ENCODE measurements at regions of chr20 and their contacts with region 1.

Region 1: GRCh38 chr20:40962730-40963504 is 65.7 kb upstream of the TOP1 start:
- DNase-seq: no peak
- H3K4me3 ChIP-seq: no peak overlapping the region
- CTCF ChIP-seq: peak; percentile 63

Region 2: GRCh38 chr20:39112178-39112743 is 1850.7 kb before region 1 on chr20:
- CTCF ChIA-PET with region 1: interaction called, 17 read pairs
- POLR2A ChIA-PET with region 1: no interaction called
- DNase-seq: no peak
- H3K4me3 ChIP-seq: no peak overlapping the region
- CTCF ChIP-seq: peak; percentile 55

Region 3: DNA sequence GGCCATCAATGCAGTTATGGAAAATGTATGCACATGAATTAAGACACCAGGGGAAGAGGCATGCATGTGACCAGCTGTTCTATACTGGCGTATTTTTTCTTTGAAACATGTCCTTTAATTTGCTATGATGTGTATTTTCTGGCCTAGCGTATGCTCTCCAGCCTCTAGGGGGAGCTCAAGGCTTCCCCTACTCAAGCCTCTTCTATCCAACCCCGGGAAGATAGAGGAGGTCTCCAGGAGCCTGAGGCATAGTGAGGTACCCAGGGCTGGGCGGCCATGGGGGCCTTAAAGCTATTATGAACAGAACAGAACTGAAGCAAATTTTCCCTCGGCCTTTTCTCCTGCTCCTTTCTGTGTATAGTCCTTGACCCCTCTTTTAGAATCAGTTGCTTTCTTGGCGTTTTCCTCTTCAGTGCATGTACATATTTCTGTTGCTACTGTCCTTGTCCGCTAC is 802.8 kb before region 1 on chr20:
- CTCF ChIA-PET with region 1: interaction called, 20 read pairs
- POLR2A ChIA-PET with region 1: no interaction called
- DNase-seq: no peak
- H3K4me3 ChIP-seq: no peak overlapping the region
- CTCF ChIP-seq: peak; percentile 65

Region 4: DNA sequence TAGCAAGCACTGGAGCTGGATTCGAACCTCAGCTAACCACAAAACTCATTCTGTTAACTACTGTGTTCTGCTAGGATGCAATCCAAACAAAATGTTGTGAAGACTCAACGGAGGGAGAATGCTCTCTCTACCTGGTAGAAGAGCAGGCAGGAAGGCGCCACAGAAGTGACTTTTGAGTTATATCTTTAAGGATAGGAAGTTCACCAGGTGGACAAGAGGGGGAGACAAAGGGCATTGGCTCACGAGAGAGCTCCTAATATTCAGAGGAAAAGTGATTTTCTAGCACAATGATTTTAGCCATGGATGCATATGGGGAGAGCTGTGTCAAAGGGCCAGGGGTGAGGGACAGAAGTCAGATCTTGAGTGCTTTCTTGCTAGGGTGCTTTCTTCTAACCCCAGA is 165.5 kb before region 1 on chr20:
- CTCF ChIA-PET with region 1: interaction called, 15 read pairs
- POLR2A ChIA-PET with region 1: no interaction called
- DNase-seq: no peak
- H3K4me3 ChIP-seq: no peak overlapping the region
- CTCF ChIP-seq: peak; percentile 3

Region 5: DNA sequence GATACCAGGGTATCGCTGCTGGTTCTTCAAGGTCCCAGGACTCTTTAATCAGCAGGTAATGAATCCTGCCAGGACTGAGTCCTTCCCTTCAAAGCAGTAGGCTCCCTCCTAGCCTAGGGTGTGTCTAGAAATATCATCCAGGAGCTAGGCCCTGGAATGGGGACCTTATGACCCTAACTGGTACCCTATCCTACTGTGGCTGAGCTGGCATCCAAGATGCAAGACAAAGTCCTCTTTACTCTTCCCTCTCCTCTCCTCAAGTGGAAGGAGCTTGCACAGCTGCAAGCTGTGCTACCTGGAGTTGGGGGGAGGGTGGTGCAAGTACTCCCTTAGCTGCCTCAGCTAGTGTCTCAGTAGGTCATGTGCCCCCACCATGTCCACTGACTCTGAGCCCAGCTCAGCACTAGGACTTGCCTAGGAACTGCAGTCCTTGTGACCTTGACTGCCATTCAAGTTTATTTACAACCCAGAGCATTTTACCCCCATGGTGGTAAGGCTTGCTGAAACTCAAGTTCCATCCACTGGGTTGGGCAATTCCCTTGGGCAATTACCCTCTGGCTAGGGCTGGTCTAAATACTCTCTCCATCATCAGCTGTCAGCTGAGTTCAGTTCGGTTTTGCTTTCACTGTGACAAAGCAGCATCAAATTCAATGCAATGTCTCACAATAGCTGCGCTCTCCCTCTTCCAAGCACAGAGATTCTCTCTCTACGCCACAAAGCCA is 17.4 kb after region 1 on chr20:
- CTCF ChIA-PET with region 1: interaction called, 33 read pairs
- POLR2A ChIA-PET with region 1: no interaction called
- DNase-seq: no peak
- H3K4me3 ChIP-seq: no peak overlapping the region
- CTCF ChIP-seq: no peak

Region 6: DNA sequence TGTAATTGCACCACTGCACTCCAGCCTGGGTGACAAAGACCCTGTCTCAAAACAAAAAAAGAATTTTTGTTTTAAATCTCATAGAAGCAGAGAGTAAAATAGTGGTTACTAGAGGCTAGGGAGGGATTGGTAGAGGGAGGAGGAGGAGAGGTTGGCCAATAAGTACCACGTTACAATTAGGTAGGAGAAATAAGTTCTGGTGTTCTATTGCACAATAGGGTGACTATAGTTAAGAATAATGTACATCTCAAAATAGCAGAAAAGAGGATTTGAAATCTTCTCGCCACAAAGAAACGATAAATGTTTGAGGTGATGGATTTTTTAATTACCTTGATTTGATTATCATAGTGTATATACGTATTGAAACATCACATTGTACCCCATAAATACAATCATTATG is 38.6 kb after region 1 on chr20:
- CTCF ChIA-PET with region 1: no interaction called
- POLR2A ChIA-PET with region 1: no interaction called
- DNase-seq: no peak
- H3K4me3 ChIP-seq: no peak overlapping the region
- CTCF ChIP-seq: no peak

Region 7: DNA sequence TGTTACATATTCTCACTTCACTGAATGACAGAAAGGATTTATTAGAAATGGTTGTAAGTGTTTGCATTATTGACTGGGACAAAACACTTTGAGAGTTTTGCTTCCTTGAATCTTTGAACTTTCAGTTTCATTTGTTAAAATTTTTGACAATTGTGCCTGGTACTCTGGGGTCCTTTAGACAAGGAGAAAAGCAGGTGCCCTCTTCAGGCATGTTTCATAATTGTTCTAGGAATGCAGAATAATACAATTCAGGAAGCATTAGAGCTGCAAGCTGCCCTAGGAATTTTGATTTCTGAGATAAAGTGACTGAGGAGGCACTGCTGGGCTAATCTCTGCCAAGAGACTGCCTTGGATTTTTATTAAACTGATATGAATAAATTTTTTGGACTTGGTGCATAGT is 115.4 kb after region 1 on chr20:
- CTCF ChIA-PET with region 1: interaction called, 26 read pairs
- POLR2A ChIA-PET with region 1: no interaction called
- DNase-seq: peak; percentile 33
- H3K4me3 ChIP-seq: no peak overlapping the region
- CTCF ChIP-seq: peak; percentile 37